ENCODE measurements at regions of chr6 and their contacts with region 1.

Region 1: GRCh38 chr6:1524040-1524480 is 85.7 kb upstream of the FOXC1 start:
- DNase-seq: peak; percentile 74 to 87
- ATAC-seq: peak; percentile 77 to 90 (median 87)
- H3K4me3 ChIP-seq: no peak overlapping the region
- H3K4me3 Mint-ChIP-seq: peak overlapping the region; percentile 77
- H3K27ac ChIP-seq: no peak overlapping the region
- H3K27ac Mint-ChIP-seq: peak overlapping the region; percentile 66 to 75
- H3K4me1 ChIP-seq: peaks cover 40% of the 10 kb centered on the region
- H3K4me1 Mint-ChIP-seq: peaks cover 41 to 46% of the 10 kb centered on the region in 2 donors
- H3K27me3 ChIP-seq: no peaks in the 10 kb centered on the region
- H3K27me3 Mint-ChIP-seq: peaks cover 0 to 7% of the 10 kb centered on the region in 2 donors
- CTCF ChIP-seq: peak; percentile 90

Region 2: DNA sequence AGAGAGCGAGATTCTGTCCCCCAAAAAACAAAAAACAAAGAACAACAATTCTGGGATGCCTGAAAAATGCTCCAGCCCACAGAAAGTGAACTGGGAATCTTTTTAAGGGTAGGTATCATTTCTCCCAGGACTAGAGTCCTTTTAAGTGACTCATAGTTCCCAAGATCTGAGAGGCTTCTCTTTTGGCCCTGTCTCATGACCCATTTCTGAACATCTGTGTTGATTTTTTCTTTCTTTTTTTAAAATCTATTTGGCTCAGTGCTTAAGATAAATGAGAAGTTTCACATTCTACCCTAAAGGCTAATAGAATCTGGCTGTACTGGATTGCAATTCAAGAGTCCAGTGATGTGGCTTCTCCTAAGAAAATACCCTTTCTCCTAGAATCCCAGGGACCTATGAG is 429.8 kb before region 1 on chr6:
- intact Hi-C with region 1: no loop called
- DNase-seq: no peak
- ATAC-seq: no peak
- H3K4me3 ChIP-seq: no peak overlapping the region
- H3K4me3 Mint-ChIP-seq: no peak overlapping the region
- H3K27ac ChIP-seq: no peak overlapping the region
- H3K27ac Mint-ChIP-seq: no peak overlapping the region
- H3K4me1 ChIP-seq: no peaks in the 10 kb centered on the region
- H3K4me1 Mint-ChIP-seq: no peaks in the 10 kb centered on the region
- H3K27me3 ChIP-seq: no peaks in the 10 kb centered on the region
- H3K27me3 Mint-ChIP-seq: peaks cover 4 to 19% of the 10 kb centered on the region in 2 donors
- CTCF ChIP-seq: no peak

Region 3: DNA sequence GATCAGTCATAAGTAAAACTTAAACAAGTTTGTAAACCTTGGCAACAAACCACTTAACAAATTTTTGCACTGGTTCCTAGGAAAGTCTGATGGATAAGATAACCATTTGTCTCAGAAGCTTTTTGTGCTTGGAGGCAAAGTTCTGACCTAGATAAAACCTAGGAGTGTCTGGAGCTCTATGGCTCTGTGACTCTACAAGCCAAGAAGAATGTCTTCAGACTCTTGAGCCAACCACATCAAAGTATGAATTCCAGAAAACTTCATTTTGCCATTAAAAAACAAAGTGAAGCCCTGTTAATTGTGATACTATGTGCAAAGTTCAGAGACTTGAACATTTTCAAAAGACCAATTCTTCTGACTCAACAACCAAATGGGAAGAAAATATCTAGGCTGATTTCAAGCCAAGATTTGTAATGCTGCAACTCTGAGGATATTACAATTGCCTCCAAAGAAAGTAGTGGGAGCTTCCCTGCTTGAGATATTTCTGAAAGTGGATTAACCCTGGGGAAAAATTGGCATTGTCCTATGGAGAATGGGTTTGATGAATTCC is 370.3 kb before region 1 on chr6:
- intact Hi-C with region 1: no loop called
- DNase-seq: no peak
- ATAC-seq: no peak
- H3K4me3 ChIP-seq: no peak overlapping the region
- H3K4me3 Mint-ChIP-seq: no peak overlapping the region
- H3K27ac ChIP-seq: no peak overlapping the region
- H3K27ac Mint-ChIP-seq: no peak overlapping the region
- H3K4me1 ChIP-seq: no peaks in the 10 kb centered on the region
- H3K4me1 Mint-ChIP-seq: no peaks in the 10 kb centered on the region
- H3K27me3 ChIP-seq: no peaks in the 10 kb centered on the region
- H3K27me3 Mint-ChIP-seq: peaks cover 19 to 50% of the 10 kb centered on the region in 2 donors
- CTCF ChIP-seq: no peak

Region 4: GRCh38 chr6:1498491-1499113 is 25.5 kb before region 1 on chr6:
- intact Hi-C with region 1: no loop called
- DNase-seq: no peak
- ATAC-seq: no peak
- H3K4me3 ChIP-seq: no peak overlapping the region
- H3K4me3 Mint-ChIP-seq: no peak overlapping the region
- H3K27ac ChIP-seq: no peak overlapping the region
- H3K27ac Mint-ChIP-seq: no peak overlapping the region
- H3K4me1 ChIP-seq: no peaks in the 10 kb centered on the region
- H3K4me1 Mint-ChIP-seq: no peaks in the 10 kb centered on the region
- H3K27me3 ChIP-seq: no peaks in the 10 kb centered on the region
- H3K27me3 Mint-ChIP-seq: peaks cover 5 to 24% of the 10 kb centered on the region in 2 donors
- CTCF ChIP-seq: no peak

Region 5: GRCh38 chr6:1554476-1555310 is 30.6 kb after region 1 on chr6:
- intact Hi-C with region 1: loop called (anchors 1 kb)
- DNase-seq: peak; percentile 69 to 85
- ATAC-seq: peak; percentile 69 to 85 (median 73)
- H3K4me3 ChIP-seq: peak overlapping the region; percentile 53
- H3K4me3 Mint-ChIP-seq: peak overlapping the region; percentile 93
- H3K27ac ChIP-seq: peak overlapping the region; percentile 57
- H3K27ac Mint-ChIP-seq: peak overlapping the region; percentile 96
- H3K4me1 ChIP-seq: peaks cover 35% of the 10 kb centered on the region
- H3K4me1 Mint-ChIP-seq: peaks cover 41 to 46% of the 10 kb centered on the region in 2 donors
- H3K27me3 ChIP-seq: no peaks in the 10 kb centered on the region
- H3K27me3 Mint-ChIP-seq: no peaks in the 10 kb centered on the region
- CTCF ChIP-seq: peak; percentile 84

Measured in natural killer cell (primary cell).